CD4-positive, alpha-beta memory T cell (primary cell): ENCODE measurements at regions of chr12 and their contacts with region 1.

Region 1: DNA sequence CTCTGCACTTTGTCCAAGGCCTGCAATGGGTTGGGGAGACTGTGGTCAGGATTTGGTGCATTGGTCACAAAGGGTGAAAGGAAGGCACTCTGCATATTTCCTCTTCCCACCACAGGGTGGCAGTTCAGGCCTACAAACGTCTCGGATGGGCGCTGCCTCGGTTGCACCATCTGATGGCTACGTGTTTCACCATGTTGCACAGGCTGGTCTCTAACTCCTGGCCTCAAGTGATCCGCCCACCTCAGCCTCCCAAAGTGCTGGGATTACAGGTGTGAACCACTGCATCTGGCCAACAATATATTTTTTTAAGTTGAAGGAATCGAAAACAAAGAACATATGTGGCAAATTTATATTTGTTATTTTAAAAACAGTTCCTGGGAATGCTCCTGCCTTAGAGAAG is 35.1 kb downstream of the TMBIM6 start:
- DNase-seq: peak in 4 of 5 donors; percentile 32 to 42 (median 38)
- H3K4me3 ChIP-seq: no peak overlapping the region
- H3K4me3 Mint-ChIP-seq: peak overlapping the region in 2 of 8 donors; percentile 38 to 64
- H3K27ac ChIP-seq: no peak overlapping the region
- H3K27ac Mint-ChIP-seq: peak overlapping the region in 1 of 7 donors; percentile 25
- H3K4me1 ChIP-seq: peaks cover 15% of the 10 kb centered on the region
- H3K4me1 Mint-ChIP-seq: peaks cover 8 to 19% (median 9%) of the 10 kb centered on the region in 4 donors
- H3K27me3 ChIP-seq: no peaks in the 10 kb centered on the region
- H3K27me3 Mint-ChIP-seq: peaks cover 10 to 19% of the 10 kb centered on the region in 2 donors

Region 2: GRCh38 chr12:49644620-49644994 is 131.8 kb before region 1 on chr12:
- CTCF ChIA-PET with region 1: interaction called, 16 read pairs
- POLR2A ChIA-PET with region 1: interaction called, 3 read pairs
- intact Hi-C with region 1: no loop called
- DNase-seq: peak; percentile 79 to 85 (median 80)
- H3K4me3 ChIP-seq: no peak overlapping the region
- H3K4me3 Mint-ChIP-seq: peak overlapping the region in 3 of 8 donors; percentile 36 to 43 (median 37)
- H3K27ac ChIP-seq: peak overlapping the region; percentile 42
- H3K27ac Mint-ChIP-seq: peak overlapping the region; percentile 76 to 96 (median 93)
- H3K4me1 ChIP-seq: peaks cover 18% of the 10 kb centered on the region
- H3K4me1 Mint-ChIP-seq: peaks cover 13 to 35% (median 22%) of the 10 kb centered on the region in 4 donors
- H3K27me3 ChIP-seq: no peaks in the 10 kb centered on the region
- H3K27me3 Mint-ChIP-seq: no peaks in the 10 kb centered on the region

Region 3: DNA sequence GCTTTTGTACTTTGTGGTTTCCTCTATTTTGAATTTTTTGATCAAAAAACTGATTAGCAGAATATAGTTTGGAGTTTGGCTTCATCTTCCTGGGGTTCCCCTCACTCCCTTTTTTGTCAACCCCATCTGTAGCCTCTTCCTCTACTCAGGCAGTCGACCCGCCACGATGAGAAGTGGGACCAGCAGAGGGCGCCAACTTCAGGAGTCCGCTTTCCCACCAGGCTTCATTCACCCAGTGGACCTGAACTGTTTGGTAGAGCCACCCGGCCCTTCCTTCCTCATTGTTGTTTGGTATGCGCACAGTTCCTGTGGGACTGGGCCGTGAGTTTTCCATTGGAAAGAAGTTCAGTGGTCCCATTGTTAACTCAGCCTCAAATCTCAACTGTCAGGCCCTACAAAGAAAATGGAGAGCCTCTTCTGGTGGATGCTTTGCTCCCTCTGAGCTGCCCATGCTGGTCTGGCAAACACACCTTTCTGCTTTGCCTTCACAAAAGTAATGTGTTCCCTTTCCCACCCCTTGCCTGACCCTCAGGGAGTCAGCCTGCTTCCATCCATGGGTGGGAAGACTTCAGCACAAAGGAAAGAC is 13.3 kb before region 1 on chr12:
- CTCF ChIA-PET with region 1: interaction called, 16 read pairs
- POLR2A ChIA-PET with region 1: no interaction called
- intact Hi-C with region 1: loop called (anchors 1 kb)
- DNase-seq: peak; percentile 74 to 86 (median 76)
- H3K4me3 ChIP-seq: no peak overlapping the region
- H3K4me3 Mint-ChIP-seq: peak overlapping the region in 7 of 8 donors; percentile 7 to 74 (median 49)
- H3K27ac ChIP-seq: peak overlapping the region; percentile 56
- H3K27ac Mint-ChIP-seq: peak overlapping the region; percentile 69 to 95 (median 86)
- H3K4me1 ChIP-seq: peaks cover 61% of the 10 kb centered on the region
- H3K4me1 Mint-ChIP-seq: peaks cover 50 to 64% (median 57%) of the 10 kb centered on the region in 4 donors
- H3K27me3 ChIP-seq: no peaks in the 10 kb centered on the region
- H3K27me3 Mint-ChIP-seq: no peaks in the 10 kb centered on the region

Region 4: GRCh38 chr12:49789992-49790391 is 13.6 kb after region 1 on chr12:
- CTCF ChIA-PET with region 1: no interaction called
- POLR2A ChIA-PET with region 1: no interaction called
- intact Hi-C with region 1: no loop called
- DNase-seq: no peak
- H3K4me3 ChIP-seq: no peak overlapping the region
- H3K4me3 Mint-ChIP-seq: no peak overlapping the region
- H3K27ac ChIP-seq: no peak overlapping the region
- H3K27ac Mint-ChIP-seq: no peak overlapping the region
- H3K4me1 ChIP-seq: no peaks in the 10 kb centered on the region
- H3K4me1 Mint-ChIP-seq: no peaks in the 10 kb centered on the region
- H3K27me3 ChIP-seq: no peaks in the 10 kb centered on the region
- H3K27me3 Mint-ChIP-seq: peaks cover 0 to 2% of the 10 kb centered on the region in 2 donors

Region 5: GRCh38 chr12:49842519-49843352 is 66.3 kb after region 1 on chr12 and contains the start of gene BCDIN3D:
- CTCF ChIA-PET with region 1: interaction called, 37 read pairs
- POLR2A ChIA-PET with region 1: interaction called, 5 read pairs
- intact Hi-C with region 1: loop called (anchors 1 kb)
- DNase-seq: peak; percentile 90 to 93 (median 91)
- H3K4me3 ChIP-seq: peak within 1 kb of the TSS; percentile 84 to 90
- H3K4me3 Mint-ChIP-seq: peak within 1 kb of the TSS; percentile 91 to 97 (median 94)
- H3K27ac ChIP-seq: peak within 1 kb of the TSS; percentile 76
- H3K27ac Mint-ChIP-seq: peak within 1 kb of the TSS; percentile 86 to 97 (median 95)
- H3K4me1 ChIP-seq: peaks cover 31% of the 10 kb centered on the region
- H3K4me1 Mint-ChIP-seq: peaks cover 23 to 48% (median 39%) of the 10 kb centered on the region in 4 donors
- H3K27me3 ChIP-seq: no peaks in the 10 kb centered on the region
- H3K27me3 Mint-ChIP-seq: no peaks in the 10 kb centered on the region
- total RNA-seq, gene BCDIN3D: 16.0 to 17.5 TPM

Region 6: DNA sequence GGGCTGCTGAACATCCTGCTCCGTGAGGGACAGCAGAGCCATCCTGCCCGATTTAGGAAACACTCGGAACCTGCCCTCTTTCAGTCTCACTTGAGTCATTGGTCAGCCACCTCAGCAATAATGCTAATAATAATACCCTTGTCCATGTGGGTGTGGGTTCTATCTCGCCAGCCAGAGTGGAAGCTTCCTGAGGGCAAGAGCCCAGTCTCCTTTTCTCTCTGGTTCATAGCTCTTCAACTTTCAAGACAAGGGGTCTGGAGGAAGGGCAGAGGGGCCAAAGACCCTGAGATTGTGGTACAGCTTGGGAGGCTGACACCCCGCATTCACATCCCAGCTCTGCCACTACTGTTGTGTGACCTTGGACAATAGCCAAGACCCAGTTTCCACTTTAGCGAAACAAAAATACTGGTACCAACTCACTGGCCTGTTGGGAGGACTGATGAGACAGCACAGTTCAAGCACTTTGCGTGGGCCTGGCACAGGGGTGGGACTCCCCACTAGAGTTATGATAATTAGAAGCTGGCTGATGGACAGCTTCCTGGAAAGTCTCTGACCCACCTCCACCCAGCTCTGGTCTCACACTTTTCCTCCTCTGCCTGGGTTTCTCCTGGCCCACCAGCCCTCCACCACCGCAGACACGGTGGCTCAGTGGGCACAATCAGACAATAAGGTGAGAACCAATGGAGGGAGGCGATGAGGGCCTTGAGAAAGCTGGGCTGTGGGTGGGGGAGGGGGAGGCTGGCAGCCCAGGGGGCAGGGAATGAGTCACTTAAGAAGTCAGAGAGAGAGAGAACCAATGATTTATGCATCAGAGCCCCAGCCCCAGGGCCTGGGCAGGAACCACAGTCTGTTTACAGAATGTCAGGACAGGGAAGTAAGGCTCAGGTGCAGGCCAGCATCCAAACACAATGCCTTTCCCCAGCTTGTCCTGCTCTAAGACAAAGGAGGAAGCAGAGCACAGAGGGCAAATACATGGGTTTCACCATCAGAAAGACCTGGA is 117.6 kb after region 1 on chr12:
- CTCF ChIA-PET with region 1: no interaction called
- POLR2A ChIA-PET with region 1: no interaction called
- intact Hi-C with region 1: no loop called
- DNase-seq: no peak
- H3K4me3 ChIP-seq: no peak overlapping the region
- H3K4me3 Mint-ChIP-seq: no peak overlapping the region
- H3K27ac ChIP-seq: no peak overlapping the region
- H3K27ac Mint-ChIP-seq: no peak overlapping the region
- H3K4me1 ChIP-seq: no peaks in the 10 kb centered on the region
- H3K4me1 Mint-ChIP-seq: peaks cover 0 to 2% (median 0%) of the 10 kb centered on the region in 4 donors
- H3K27me3 ChIP-seq: no peaks in the 10 kb centered on the region
- H3K27me3 Mint-ChIP-seq: peaks cover 0 to 3% of the 10 kb centered on the region in 2 donors

Region 7: GRCh38 chr12:49967042-49967776 is 190.8 kb after region 1 on chr12:
- CTCF ChIA-PET with region 1: no interaction called
- POLR2A ChIA-PET with region 1: no interaction called
- intact Hi-C with region 1: loop called (anchors 1 kb)
- DNase-seq: peak; percentile 88 to 93 (median 89)
- H3K4me3 ChIP-seq: peak overlapping the region; percentile 47 to 63
- H3K4me3 Mint-ChIP-seq: peak overlapping the region; percentile 51 to 85 (median 76)
- H3K27ac ChIP-seq: no peak overlapping the region
- H3K27ac Mint-ChIP-seq: peak overlapping the region in 2 of 7 donors; percentile 42 to 46
- H3K4me1 ChIP-seq: peaks cover 10% of the 10 kb centered on the region
- H3K4me1 Mint-ChIP-seq: peaks cover 1 to 11% (median 4%) of the 10 kb centered on the region in 4 donors
- H3K27me3 ChIP-seq: peaks cover 15% of the 10 kb centered on the region
- H3K27me3 Mint-ChIP-seq: peaks cover 20 to 39% of the 10 kb centered on the region in 2 donors